Vagina (tissue), 2 donors: ENCODE measurements at regions of chr7 and their contacts with region 1.

Region 1: DNA sequence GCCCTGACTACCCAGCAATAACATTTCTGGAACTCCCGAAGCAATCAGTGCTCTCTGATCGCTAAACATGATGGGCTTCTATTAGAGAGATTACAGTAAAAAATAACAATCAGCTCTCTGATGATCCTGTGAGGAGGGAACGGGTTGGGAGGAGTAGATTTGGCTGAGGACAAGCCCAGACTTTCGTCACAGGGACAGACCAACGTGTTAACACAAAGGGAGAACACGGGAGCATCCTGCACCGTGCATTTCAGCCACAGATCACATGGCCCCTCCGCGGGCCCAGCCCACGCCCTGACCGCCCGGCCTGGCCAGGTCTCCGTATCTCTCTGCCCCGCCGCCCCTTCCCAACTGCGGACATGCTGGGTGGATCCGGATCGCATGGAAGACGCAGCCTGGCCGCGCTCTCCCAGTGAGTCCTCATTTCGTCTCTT is 95.0 kb upstream of the AGBL3 start:
- DNase-seq: peak in 1 of 2 donors; percentile 95
- H3K4me3 ChIP-seq: peak overlapping the region; percentile 48 to 49
- H3K27ac ChIP-seq: peak overlapping the region; percentile 83
- H3K4me1 ChIP-seq: peaks cover 46% of the 10 kb centered on the region
- H3K27me3 ChIP-seq: no peaks in the 10 kb centered on the region
- CTCF ChIP-seq: no peak
- POLR2A ChIP-seq: peak in 1 of 2 donors; percentile 25

Region 2: GRCh38 chr7:134789967-134790685 is 101.2 kb before region 1 on chr7:
- intact Hi-C with region 1: loop called (anchors 5 kb)
- DNase-seq: no peak
- H3K4me3 ChIP-seq: no peak overlapping the region
- H3K27ac ChIP-seq: peak overlapping the region; percentile 83
- H3K4me1 ChIP-seq: peaks cover 47% of the 10 kb centered on the region
- H3K27me3 ChIP-seq: no peaks in the 10 kb centered on the region
- CTCF ChIP-seq: no peak
- POLR2A ChIP-seq: no peak

Region 3: DNA sequence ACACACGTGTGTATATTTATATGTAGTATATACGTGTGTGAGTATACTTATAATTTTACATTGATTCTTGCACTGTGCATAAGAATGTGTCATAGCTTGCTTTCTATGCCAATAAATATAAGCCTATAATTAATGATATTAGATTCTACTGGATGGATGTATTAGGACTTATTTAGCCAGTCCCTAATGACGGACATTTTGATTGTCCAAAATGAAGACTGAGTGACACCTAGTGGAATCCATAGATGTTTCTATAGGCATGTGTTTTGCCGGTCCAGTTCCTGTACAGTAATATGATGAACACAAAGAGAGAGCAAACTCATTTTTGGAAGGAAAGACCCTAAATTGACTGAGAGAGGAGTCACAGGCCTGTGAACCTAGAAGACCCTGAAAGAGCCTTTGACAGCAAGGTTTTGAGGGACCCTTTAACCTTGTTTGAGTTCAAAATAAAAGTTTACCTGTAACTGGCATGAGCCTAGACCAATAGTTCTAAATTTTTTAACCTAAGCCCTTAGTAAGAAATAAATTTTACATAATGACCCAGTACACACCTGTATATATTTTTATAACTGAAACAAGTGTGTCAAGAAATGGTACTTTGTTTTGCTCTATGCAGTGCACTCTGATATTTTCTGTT is 52.6 kb after region 1 on chr7:
- intact Hi-C with region 1: loop called (anchors 10 kb)
- DNase-seq: no peak
- H3K4me3 ChIP-seq: no peak overlapping the region
- H3K27ac ChIP-seq: no peak overlapping the region
- H3K4me1 ChIP-seq: peaks cover 16% of the 10 kb centered on the region
- H3K27me3 ChIP-seq: no peaks in the 10 kb centered on the region
- CTCF ChIP-seq: no peak
- POLR2A ChIP-seq: no peak

Region 4: GRCh38 chr7:135102372-135102771 is 211.1 kb after region 1 on chr7:
- intact Hi-C with region 1: no loop called
- DNase-seq: no peak
- H3K4me3 ChIP-seq: no peak overlapping the region
- H3K27ac ChIP-seq: no peak overlapping the region
- H3K4me1 ChIP-seq: no peaks in the 10 kb centered on the region
- H3K27me3 ChIP-seq: no peaks in the 10 kb centered on the region
- CTCF ChIP-seq: no peak
- POLR2A ChIP-seq: no peak